ENCODE measurements at regions of chr9 and their contacts with region 1.

Region 1: GRCh38 chr9:38362852-38363593 is 29.5 kb upstream of the ALDH1B1 start:
- DNase-seq: peak; percentile 61
- H3K4me3 ChIP-seq: no peak overlapping the region
- H3K27ac ChIP-seq: no peak overlapping the region
- H3K4me1 ChIP-seq: peaks cover 3% of the 10 kb centered on the region
- H3K27me3 ChIP-seq: no peaks in the 10 kb centered on the region
- CTCF ChIP-seq: peak; percentile 60 to 71

Region 2: DNA sequence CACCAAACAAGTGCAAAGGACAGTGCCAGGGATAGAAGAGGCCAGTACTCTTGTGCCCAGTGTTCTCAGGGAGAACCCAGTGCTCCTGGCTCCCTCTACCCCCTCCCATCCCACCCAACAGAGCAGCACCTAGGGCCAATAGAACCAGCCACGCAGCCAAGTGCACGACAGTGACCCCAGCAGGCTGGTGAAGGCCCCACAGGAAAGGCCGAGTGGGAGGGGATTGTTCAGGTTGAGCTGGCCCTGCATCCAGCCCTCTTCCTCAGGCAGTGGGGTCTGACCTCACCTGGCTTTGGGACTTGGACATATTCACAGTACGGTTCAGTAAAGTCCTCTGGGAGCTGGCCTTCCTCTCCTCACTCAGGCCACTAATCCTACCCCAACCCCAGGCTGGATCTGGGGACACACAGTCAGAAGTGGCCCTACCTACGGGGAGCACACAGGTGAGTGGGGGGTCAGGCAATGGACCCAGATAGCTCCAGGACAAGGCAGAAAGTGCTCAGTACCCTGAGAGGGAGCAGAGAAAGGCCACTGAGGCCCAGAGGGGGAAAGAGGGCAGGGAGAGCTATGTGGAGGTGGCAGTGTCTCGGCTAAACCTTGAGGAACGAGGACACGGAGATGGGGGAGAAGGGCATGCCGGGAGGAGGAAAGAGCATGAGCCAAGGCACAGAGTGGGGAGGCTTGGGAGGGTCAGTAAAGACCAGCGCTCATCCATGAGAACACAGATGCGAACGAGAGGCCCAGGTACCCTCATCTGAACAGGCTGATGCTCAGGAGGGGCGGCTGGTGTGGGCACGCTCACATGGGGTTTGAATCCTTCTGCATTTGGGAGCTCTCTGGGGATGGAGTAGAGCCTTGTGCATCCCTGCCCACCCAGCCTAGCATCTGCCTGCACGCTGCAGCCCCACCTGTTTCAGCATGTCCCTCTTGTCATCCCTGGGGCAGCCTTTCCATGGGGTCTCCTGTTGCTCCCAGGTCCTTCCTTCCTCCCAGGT is 851.7 kb before region 1 on chr9:
- CTCF ChIA-PET with region 1: no interaction called
- dilution Hi-C with region 1: no loop called
- in situ Hi-C with region 1: loop called in 1 of 2 experiments (anchors 25 kb)
- intact Hi-C with region 1: no loop called
- DNase-seq: no peak
- H3K4me3 ChIP-seq: no peak overlapping the region
- H3K27ac ChIP-seq: no peak overlapping the region
- H3K4me1 ChIP-seq: no peaks in the 10 kb centered on the region
- H3K27me3 ChIP-seq: no peaks in the 10 kb centered on the region
- CTCF ChIP-seq: no peak

Region 3: DNA sequence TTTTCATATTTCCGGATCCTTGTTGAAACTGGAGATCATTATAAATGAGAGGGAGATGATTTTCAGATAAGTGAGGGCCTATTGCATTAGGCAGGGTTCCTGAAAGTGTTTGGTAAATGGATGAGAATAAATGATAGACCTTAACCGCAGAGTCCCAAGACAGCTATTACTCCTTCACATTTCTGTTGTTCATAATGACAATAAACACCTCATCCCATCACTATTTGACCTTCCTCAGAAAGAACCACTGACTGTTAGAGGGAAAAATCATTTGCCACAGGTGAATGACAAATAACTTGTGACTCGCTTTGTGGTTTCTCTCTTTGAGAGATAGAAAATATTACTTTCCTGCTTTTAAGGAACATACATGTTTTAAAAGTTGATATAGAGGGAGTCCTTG is 656.7 kb before region 1 on chr9:
- CTCF ChIA-PET with region 1: no interaction called
- dilution Hi-C with region 1: no loop called
- in situ Hi-C with region 1: loop called in 1 of 2 experiments (anchors 25 kb)
- intact Hi-C with region 1: no loop called
- DNase-seq: peak; percentile 69
- H3K4me3 ChIP-seq: no peak overlapping the region
- H3K27ac ChIP-seq: no peak overlapping the region
- H3K4me1 ChIP-seq: peaks cover 9% of the 10 kb centered on the region
- H3K27me3 ChIP-seq: no peaks in the 10 kb centered on the region
- CTCF ChIP-seq: no peak

Region 4: GRCh38 chr9:37903647-37904444 is 459.2 kb before region 1 on chr9 and contains the start of gene SLC25A51:
- CTCF ChIA-PET with region 1: no interaction called
- dilution Hi-C with region 1: no loop called
- in situ Hi-C with region 1: loop called in 1 of 2 experiments (anchors 10 kb)
- intact Hi-C with region 1: no loop called
- DNase-seq: peak; percentile 94
- H3K4me3 ChIP-seq: peak within 1 kb of the TSS; percentile 60 to 83 (median 78)
- H3K27ac ChIP-seq: peak within 1 kb of the TSS; percentile 67
- H3K4me1 ChIP-seq: peaks cover 25% of the 10 kb centered on the region
- H3K27me3 ChIP-seq: no peaks in the 10 kb centered on the region
- CTCF ChIP-seq: peak; percentile 92 to 98
- total RNA-seq, gene SLC25A51: 30.0 to 78.0 TPM

Region 5: GRCh38 chr9:38088006-38088925 is 274.8 kb before region 1 on chr9:
- CTCF ChIA-PET with region 1: no interaction called
- dilution Hi-C with region 1: no loop called
- in situ Hi-C with region 1: no loop called
- intact Hi-C with region 1: loop called (anchors 1 kb)
- DNase-seq: peak; percentile 32
- H3K4me3 ChIP-seq: no peak overlapping the region
- H3K27ac ChIP-seq: no peak overlapping the region
- H3K4me1 ChIP-seq: peaks cover 1% of the 10 kb centered on the region
- H3K27me3 ChIP-seq: no peaks in the 10 kb centered on the region
- CTCF ChIP-seq: peak; percentile 93 to 98